ENCODE measurements at regions of chrX and their contacts with region 1.

Region 1: GRCh38 chrX:41923257-41923969 is at the start of gene CASK:
- DNase-seq: peak; percentile 88
- H3K4me3 Mint-ChIP-seq: peak within 1 kb of the TSS; percentile 95
- H3K27ac Mint-ChIP-seq: peak within 1 kb of the TSS; percentile 90
- H3K4me1 Mint-ChIP-seq: peaks cover 33% of the 10 kb centered on the region
- H3K27me3 Mint-ChIP-seq: peaks cover 5% of the 10 kb centered on the region
- total RNA-seq, gene CASK: 17.4 and 30.5 TPM in 2 replicates

Region 2: DNA sequence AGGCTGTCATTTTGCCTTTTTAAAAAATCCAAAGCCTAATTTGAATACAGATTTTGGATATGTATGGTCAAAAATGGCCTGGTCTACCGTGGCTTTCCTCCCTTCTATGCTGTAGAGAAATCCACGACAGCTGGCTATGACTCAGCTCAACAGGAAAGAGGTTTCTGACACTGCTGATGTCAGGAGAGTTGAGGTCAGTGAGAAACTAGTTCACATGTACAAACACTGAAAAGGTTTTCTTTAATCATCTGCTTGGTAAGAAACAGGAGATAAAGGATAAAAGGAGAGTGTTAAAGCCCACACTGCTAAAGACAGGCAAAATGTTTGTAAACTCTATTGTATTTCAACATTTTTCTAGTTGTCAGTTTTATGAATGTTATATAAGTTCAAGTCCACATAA is 362.4 kb before region 1 on chrX:
- intact Hi-C with region 1: loop called (anchors 5 kb)
- DNase-seq: peak; percentile 25
- H3K4me3 Mint-ChIP-seq: peak overlapping the region; percentile 56
- H3K27ac Mint-ChIP-seq: peak overlapping the region; percentile 80
- H3K4me1 Mint-ChIP-seq: peaks cover 57% of the 10 kb centered on the region
- H3K27me3 Mint-ChIP-seq: no peaks in the 10 kb centered on the region

Region 3: DNA sequence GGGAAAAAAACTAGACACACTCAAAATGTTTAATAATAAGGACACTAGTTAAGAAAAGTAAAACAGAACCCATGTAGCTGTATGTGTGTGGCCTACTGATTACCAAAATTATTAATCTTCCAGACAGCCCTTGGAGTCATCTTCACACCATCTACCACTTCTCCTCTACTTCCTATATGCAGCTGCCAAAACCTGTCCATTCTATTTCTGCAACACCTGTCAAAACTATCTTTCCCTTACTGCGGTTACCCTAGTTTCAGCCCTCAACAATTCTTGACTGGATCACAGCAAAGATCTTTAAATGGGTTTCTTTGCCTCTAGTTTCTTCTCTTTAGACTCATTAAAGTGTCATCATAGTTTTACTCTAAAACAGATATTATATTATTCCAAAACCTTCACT is 126.8 kb before region 1 on chrX:
- intact Hi-C with region 1: loop called (anchors 2 kb)
- DNase-seq: no peak
- H3K4me3 Mint-ChIP-seq: no peak overlapping the region
- H3K27ac Mint-ChIP-seq: peak overlapping the region; percentile 8
- H3K4me1 Mint-ChIP-seq: peaks cover 30% of the 10 kb centered on the region
- H3K27me3 Mint-ChIP-seq: no peaks in the 10 kb centered on the region

Region 4: DNA sequence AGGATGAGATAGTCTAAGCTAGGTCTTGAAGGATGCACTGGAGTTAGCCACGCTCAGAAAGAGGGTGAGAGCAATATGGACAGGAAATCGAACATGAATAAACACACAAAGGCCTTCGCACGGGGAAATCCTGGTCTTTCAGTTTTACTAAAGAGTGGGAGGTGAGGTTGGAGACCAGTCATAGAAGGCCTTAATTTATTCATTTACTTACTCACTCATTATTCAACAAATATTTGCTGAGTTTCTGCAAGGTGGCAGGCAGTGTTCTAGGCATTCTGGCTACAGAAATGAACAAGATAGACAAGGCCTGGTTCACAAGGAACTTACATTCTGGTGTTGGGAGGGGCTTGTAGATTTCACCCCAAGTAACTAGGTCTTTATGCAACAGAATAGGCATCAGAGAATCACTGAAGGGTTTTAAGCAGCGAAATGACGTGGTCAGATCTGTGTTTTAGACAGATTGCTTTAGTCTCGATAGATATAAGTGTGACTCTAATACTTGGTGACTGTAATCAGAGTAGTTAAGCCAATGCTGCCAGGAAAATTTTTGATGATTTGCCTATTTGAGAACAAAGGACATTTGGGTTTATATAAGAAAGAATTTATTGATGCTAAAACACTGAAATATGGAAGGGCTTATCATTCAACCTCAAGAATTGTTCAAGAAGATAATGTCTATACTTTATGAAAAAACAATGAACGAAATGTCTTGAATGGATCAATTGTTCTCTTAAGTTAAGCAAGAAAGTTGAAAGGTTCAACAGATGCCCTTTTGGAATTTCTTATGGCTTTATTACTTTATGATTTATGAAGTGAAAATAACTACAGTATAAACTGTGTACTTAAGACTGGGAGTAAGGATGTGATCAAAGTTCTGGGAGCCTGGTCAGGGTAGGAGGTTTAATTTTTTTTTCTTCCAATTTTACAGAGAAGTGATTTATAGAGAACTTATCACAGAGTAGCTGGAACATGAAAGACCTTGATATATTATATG is 184.4 kb after region 1 on chrX:
- intact Hi-C with region 1: loop called (anchors 1 kb)
- DNase-seq: no peak
- H3K4me3 Mint-ChIP-seq: peak overlapping the region; percentile 31
- H3K27ac Mint-ChIP-seq: peak overlapping the region; percentile 52
- H3K4me1 Mint-ChIP-seq: peaks cover 29% of the 10 kb centered on the region
- H3K27me3 Mint-ChIP-seq: no peaks in the 10 kb centered on the region

Region 5: GRCh38 chrX:42943051-42943974 is 1019.9 kb after region 1 on chrX:
- intact Hi-C with region 1: loop called (anchors 5 kb)
- DNase-seq: peak; percentile 12
- H3K4me3 Mint-ChIP-seq: peak overlapping the region; percentile 27
- H3K27ac Mint-ChIP-seq: peak overlapping the region; percentile 85
- H3K4me1 Mint-ChIP-seq: peaks cover 79% of the 10 kb centered on the region
- H3K27me3 Mint-ChIP-seq: no peaks in the 10 kb centered on the region